ENCODE measurements at regions of chr1 and their contacts with region 1.

Region 1: DNA sequence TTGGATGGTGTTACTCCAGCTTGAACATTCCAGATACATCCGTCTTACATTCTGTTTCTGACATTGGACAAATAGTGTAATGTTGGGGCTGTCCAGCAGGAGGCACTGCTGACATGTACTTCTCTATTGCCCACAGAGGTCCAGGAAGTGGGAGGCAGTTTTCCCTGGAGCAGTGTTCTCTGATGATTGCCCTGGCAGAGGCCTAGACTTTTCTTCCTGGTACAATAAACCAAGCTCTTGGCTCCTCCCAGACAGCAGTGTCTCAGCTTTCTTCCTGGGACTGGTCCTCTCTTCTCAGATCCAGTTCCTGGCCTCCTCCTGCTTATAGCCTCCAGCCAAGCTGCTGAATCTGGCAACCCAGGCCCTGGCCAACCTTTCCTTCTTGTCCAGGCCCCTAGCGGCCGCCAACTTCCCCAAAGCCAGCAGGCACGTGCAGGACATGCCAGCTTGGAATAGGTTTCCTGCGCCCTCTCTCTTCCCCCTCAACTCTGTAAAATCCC is 14.9 kb upstream of the IFNLR1 start:
- DNase-seq: peak; percentile 77
- H3K4me3 ChIP-seq: no peak overlapping the region; a peak in 1 of 4 replicates
- H3K27ac ChIP-seq: no peak overlapping the region; a peak in 1 of 4 replicates
- H3K4me1 ChIP-seq: peaks cover 0 to 7% of the 10 kb centered on the region in 2 experiments; a peak in 1 of 4 replicates
- H3K27me3 ChIP-seq: no peaks in the 10 kb centered on the region
- CTCF ChIP-seq: peak; percentile 85
- EP300 ChIP-seq: no peak
- RAD21 ChIP-seq: peak; percentile 88

Region 2: DNA sequence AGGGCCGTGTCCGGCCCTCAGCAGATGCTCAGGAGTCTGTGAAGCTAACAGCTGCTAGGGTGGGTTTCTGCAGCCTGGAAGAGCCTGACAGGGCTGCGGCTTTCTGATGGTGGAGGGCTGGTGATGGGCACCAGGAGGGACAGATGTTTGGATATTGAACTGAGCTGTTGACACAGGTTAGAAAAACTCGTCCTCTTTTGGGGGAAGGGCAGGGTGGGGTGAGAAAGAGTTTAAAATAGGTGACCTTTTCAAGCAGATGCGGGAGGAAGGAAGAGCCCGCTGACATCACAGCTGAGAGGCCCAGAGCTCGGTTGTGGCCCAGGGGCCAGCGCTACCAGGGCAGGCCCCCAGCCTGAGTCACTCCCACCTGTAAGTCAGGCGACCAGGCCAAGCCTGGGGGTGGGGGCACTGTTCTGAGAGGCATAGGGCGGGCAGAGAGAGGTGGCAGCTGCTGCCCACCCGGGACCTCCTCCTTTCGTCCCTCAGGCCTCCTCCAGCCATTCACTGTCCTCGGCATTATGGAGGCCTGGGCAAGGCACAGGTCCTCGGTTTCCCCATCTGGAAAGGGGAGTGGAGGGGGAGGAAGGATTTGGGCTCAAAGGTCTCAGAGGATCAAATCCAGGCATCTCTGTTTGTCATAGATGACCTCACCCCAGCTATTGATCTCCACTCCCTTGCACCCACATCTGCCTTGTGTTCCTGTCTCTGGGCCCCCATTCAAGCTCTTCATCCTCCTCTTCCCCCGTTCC is 610.4 kb before region 1 on chr1:
- CTCF ChIA-PET with region 1: no interaction called
- POLR2A ChIA-PET with region 1: no interaction called
- DNase-seq: no peak
- H3K4me3 ChIP-seq: no peak overlapping the region
- H3K27ac ChIP-seq: no peak overlapping the region
- H3K4me1 ChIP-seq: peaks cover 0 to 17% of the 10 kb centered on the region in 2 experiments; a peak in 1 of 4 replicates
- H3K27me3 ChIP-seq: no peaks in the 10 kb centered on the region
- CTCF ChIP-seq: no peak
- EP300 ChIP-seq: no peak
- RAD21 ChIP-seq: no peak

Region 3: DNA sequence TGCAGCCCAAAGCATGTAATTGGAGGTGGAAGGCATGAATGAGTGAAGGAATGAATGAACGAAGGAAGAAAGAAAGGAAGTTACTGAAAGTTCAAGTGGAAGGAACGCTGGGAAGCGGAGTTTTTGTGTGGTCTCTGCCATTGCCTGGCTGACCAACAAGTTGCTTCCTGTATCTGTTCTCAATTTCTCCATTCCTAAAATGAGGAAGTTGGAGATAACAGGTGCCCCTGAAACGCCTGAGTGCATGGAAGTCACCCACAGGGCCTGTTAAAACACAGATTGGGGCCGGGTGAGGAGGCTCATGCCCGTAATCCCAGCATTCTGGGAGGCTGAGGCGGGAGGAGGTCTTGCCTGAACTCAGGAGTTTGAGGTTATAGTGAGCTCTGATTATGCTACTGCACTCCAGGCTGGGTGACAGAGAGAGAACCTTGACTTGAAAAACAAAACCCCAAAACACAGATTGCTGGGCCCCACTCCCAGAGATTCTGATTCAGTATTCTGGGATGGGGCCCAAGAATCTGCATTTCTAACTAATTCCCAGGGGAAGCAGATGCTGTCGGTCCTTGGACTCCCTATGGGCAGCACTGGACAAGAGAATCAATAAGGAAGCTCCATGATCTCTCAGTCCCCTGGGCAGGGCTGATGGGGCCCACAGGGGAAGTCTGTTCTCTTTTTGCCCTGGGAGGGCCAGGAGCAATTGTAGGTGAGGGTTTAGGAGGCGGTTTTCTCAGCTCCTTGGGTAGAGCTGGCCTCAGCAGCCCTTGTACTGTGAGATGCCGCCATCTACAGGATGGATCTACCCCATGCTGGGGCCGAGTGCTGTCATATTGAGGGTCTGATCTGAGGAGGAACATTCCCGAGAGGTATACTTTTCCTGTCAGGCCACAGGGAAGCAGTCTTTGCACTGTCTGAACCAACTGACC is 285.5 kb before region 1 on chr1:
- CTCF ChIA-PET with region 1: no interaction called
- POLR2A ChIA-PET with region 1: no interaction called
- DNase-seq: peak; percentile 85
- H3K4me3 ChIP-seq: no peak overlapping the region
- H3K27ac ChIP-seq: no peak overlapping the region
- H3K4me1 ChIP-seq: peaks cover 0 to 6% of the 10 kb centered on the region in 2 experiments; a peak in 1 of 4 replicates
- H3K27me3 ChIP-seq: no peaks in the 10 kb centered on the region
- CTCF ChIP-seq: peak; percentile 62
- EP300 ChIP-seq: no peak
- RAD21 ChIP-seq: peak; percentile 93

Region 4: DNA sequence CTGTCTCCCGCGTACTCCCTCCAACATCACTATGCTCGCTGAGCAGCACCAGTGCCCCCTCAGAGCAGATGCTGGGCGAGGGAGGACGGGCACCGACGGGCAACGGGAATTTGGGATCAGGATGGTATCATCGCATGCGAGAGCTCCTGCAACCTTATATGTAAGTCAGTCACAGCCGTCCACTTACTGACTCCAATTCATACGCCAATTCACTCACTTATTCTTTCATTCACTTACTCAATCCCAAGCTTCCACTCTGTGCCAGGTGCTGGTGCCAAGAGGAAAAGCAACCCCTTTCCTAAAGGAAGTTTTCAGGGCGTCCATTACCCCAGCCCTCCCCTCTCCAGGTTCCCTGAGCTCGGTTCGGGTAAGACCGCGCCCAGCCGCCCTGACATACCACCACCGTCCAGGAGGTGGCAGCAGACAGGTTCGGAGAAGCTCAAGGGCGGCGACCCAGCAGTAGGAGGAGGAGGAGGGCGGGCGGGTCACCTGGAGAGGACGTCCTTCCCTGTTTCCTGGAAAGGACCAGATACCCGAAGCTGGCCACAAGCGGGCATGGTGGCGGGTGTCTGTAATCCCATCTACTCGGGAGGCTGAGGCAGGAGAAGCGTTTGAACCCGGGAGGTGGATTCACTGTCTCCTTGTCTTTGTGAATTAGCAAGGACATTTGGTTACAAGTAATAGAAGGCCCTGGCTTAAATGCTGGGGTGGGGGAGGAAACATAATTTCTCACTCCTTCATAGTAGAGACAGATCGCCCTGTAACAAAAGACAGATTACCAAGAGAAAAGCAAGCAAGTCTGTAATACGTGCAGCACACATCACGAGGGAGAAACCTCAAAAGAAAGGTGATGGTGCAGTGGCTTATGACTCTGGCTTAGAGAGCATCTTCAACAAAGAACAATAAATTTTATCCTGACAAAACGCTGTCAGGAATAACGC is 51.5 kb before region 1 on chr1:
- CTCF ChIA-PET with region 1: interaction called, 72 read pairs
- POLR2A ChIA-PET with region 1: no interaction called
- DNase-seq: peak; percentile 86
- H3K4me3 ChIP-seq: peak overlapping the region; percentile 25 to 42; a peak in 3 of 4 replicates
- H3K27ac ChIP-seq: no peak overlapping the region
- H3K4me1 ChIP-seq: peaks cover 0 to 4% of the 10 kb centered on the region in 2 experiments; a peak in 1 of 4 replicates
- H3K27me3 ChIP-seq: no peaks in the 10 kb centered on the region; the same call in 1 of the 2 replicates
- CTCF ChIP-seq: peak; percentile 78
- EP300 ChIP-seq: no peak
- RAD21 ChIP-seq: peak; percentile 62

Region 5: DNA sequence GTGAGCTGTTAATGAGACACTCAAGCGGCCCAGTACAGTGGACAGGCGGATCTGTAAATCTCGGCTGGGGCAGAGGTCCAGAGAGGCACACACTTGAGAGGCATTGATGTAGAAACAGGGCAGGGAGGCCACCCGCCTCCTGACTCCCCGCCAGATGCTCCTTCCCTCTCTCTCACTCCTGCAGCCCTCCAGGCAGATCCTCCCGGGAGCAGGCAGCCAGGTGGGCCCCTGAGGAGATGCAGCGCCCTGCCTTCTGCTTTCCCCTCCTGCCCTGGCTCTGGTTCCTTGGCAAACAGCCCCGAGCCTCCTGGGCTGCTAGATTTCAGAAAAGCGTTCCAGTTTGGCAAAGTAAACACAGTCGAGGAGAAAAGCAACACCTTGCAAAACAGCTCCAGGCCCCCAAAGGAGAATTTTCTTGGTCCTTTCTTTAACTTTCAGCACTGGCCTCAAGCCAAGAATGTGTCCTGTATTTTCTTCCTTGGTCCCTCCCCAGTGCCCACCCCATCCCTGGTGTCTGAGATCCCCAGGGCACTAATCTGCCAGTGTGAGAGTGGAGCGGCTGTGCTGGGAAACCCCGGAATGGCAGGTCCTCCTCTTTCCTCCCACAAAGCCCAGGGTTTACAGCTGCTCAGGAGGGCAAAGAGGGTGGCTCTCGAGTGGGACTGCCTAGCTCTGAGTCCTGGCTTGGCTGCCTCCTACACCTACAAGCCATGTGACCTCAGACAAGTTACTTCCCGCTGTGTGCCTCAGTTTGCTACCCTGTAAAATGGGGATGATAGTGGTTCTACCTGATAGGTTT is 14.5 kb after region 1 on chr1:
- CTCF ChIA-PET with region 1: interaction called, 12 read pairs
- POLR2A ChIA-PET with region 1: no interaction called
- DNase-seq: peak; percentile 59
- H3K4me3 ChIP-seq: no peak overlapping the region
- H3K27ac ChIP-seq: no peak overlapping the region
- H3K4me1 ChIP-seq: peaks cover 0 to 8% of the 10 kb centered on the region in 2 experiments; a peak in 1 of 4 replicates
- H3K27me3 ChIP-seq: peaks cover 13% of the 10 kb centered on the region; the same call in 1 of the 2 replicates
- CTCF ChIP-seq: no peak
- EP300 ChIP-seq: no peak
- RAD21 ChIP-seq: no peak

Region 6: DNA sequence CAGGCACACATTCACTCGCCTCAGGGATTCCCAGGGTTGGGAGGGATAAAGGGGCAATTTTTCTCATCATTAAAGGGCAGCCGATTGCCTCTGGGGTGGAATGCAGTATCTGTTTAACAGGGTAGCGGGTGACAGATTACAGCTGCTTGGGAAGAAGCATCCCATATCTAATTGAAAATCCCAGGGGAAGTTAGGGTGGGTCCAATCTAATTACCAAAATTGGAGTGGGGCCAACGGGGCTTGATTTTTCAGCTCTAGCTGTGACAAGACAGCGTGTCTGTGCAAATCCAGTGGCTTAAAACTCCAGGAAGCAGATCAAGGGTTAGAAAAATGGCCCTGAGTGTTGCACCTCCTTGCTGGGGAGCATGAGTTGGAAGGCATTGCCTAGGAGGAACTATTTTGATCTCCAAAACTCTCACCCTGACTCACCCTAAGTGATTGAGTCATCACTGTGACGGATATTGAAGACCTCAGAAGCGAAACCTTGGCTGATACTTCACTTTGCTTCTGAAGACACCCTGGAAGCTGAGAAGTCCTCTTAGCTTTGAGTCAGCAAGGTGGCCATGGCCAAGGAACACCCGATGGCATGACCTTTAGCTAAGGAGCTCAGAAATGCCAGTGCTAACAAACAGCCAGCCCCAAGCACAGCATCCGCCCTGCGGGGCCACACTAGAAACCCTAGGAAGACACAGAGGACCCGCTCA is 163.1 kb after region 1 on chr1:
- CTCF ChIA-PET with region 1: interaction called, 41 read pairs
- POLR2A ChIA-PET with region 1: no interaction called
- DNase-seq: peak; percentile 76
- H3K4me3 ChIP-seq: no peak overlapping the region
- H3K27ac ChIP-seq: peak overlapping the region; percentile 22 to 73; a peak in 3 of 4 replicates
- H3K4me1 ChIP-seq: peaks cover 11 to 15% of the 10 kb centered on the region in 2 experiments
- H3K27me3 ChIP-seq: no peaks in the 10 kb centered on the region
- CTCF ChIP-seq: no peak
- EP300 ChIP-seq: peak; percentile 25 to 53; a peak in 2 of 4 replicates
- RAD21 ChIP-seq: no peak

Region 7: DNA sequence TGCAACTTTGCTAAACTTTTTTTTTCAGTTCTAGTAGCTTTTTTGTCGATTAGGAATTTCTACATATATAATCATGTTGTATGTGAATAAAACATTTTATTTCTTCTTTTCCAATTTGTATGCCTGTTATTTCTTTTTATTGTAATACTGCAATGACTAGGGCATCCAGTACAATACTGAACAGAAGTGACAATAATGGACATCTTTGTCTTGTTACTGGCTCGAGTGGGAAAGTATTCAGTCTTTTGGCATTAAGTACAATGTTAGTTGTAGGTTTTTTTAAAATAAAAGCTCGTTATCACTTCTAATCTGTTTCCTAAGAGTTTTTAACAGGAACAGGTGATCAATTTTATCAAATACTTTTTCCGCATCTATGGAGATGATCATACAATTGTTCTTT is 201.8 kb after region 1 on chr1:
- CTCF ChIA-PET with region 1: interaction called, 19 read pairs
- POLR2A ChIA-PET with region 1: no interaction called
- DNase-seq: no peak
- H3K4me3 ChIP-seq: no peak overlapping the region
- H3K27ac ChIP-seq: no peak overlapping the region
- H3K4me1 ChIP-seq: no peaks in the 10 kb centered on the region
- H3K27me3 ChIP-seq: no peaks in the 10 kb centered on the region
- CTCF ChIP-seq: no peak
- EP300 ChIP-seq: no peak
- RAD21 ChIP-seq: no peak

Region 8: DNA sequence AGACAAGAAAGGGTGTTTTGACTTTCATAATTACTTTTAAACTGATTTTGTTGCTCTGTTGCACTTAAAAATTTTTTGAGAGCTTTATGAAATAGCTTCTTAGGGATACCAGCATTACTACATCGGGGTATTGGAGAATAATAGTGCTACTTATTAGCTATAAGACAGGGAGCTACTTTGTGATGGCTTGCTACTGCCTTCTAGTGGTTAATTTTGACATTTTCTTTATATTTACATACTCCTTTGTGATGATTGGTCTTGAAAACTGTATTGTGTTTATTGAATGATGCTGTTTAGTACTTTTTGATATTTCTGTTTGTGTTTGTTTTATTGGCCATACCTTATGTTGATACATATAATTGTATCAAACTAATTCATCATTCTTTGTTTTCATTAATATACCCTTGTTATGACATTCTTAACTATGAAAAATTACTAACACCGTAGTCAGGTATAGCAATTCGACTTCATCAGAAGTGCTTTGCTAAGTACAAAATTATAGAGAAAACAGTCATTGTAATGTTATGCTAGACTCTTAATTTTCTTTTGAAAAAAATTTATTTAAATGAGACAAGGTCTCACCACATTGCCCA is 628.8 kb after region 1 on chr1:
- CTCF ChIA-PET with region 1: interaction called, 10 read pairs
- POLR2A ChIA-PET with region 1: no interaction called
- DNase-seq: peak; percentile 53
- H3K4me3 ChIP-seq: peak overlapping the region in 1 of 2 experiments; percentile 18; a peak in 1 of 4 replicates
- H3K27ac ChIP-seq: peak overlapping the region in 1 of 2 experiments; percentile 28; a peak in 1 of 4 replicates
- H3K4me1 ChIP-seq: peaks cover 28 to 37% of the 10 kb centered on the region in 2 experiments
- H3K27me3 ChIP-seq: no peaks in the 10 kb centered on the region
- CTCF ChIP-seq: peak; percentile 94
- EP300 ChIP-seq: no peak
- RAD21 ChIP-seq: peak; percentile 94

Measured in SK-N-SH (cell line).